ENCODE measurements at regions of chr17 and their contacts with region 1.

Region 1: GRCh38 chr17:37239690-37240334 is 136.0 kb upstream of the C17orf78 start:
- DNase-seq: peak; percentile 46
- H3K4me3 Mint-ChIP-seq: no peak overlapping the region
- H3K27ac Mint-ChIP-seq: no peak overlapping the region
- H3K4me1 Mint-ChIP-seq: peaks cover 10% of the 10 kb centered on the region
- H3K27me3 Mint-ChIP-seq: no peaks in the 10 kb centered on the region
- CTCF ChIP-seq: peak; percentile 55

Region 2: DNA sequence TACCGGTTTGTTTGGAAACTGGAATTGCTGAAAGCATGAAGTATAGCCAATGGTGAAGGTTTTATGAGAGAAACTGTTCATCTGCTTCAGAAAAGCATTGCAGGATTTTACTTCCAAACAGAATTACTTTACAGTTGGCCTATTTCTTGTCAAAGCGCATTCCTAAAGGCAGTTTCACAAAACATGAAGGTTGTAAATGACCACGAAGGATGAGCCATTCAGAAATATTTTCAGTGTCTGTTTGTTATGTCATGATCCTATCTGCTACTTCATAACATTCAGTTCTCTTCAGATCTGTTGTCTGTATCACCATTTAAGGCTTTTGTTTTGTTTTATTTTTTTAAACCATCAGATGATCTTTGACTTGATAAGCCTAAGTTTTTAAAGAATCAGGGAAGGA is 245.4 kb before region 1 on chr17:
- CTCF ChIA-PET with region 1: no interaction called
- POLR2A ChIA-PET with region 1: no interaction called
- intact Hi-C with region 1: no loop called
- DNase-seq: no peak
- H3K4me3 Mint-ChIP-seq: no peak overlapping the region
- H3K27ac Mint-ChIP-seq: peak overlapping the region; percentile 5
- H3K4me1 Mint-ChIP-seq: no peaks in the 10 kb centered on the region
- H3K27me3 Mint-ChIP-seq: no peaks in the 10 kb centered on the region
- CTCF ChIP-seq: no peak

Region 3: GRCh38 chr17:37220607-37220953 is 19.2 kb before region 1 on chr17:
- CTCF ChIA-PET with region 1: interaction called, 23 read pairs
- POLR2A ChIA-PET with region 1: interaction called, 3 read pairs
- intact Hi-C with region 1: no loop called
- DNase-seq: peak; percentile 8
- H3K4me3 Mint-ChIP-seq: no peak overlapping the region
- H3K27ac Mint-ChIP-seq: peak overlapping the region; percentile 83
- H3K4me1 Mint-ChIP-seq: peaks cover 11% of the 10 kb centered on the region
- H3K27me3 Mint-ChIP-seq: no peaks in the 10 kb centered on the region
- CTCF ChIP-seq: peak; percentile 47

Region 4: GRCh38 chr17:37255432-37255831 is 15.6 kb after region 1 on chr17:
- CTCF ChIA-PET with region 1: interaction called, 19 read pairs
- POLR2A ChIA-PET with region 1: interaction called, 7 read pairs
- intact Hi-C with region 1: no loop called
- DNase-seq: no peak
- H3K4me3 Mint-ChIP-seq: no peak overlapping the region
- H3K27ac Mint-ChIP-seq: no peak overlapping the region
- H3K4me1 Mint-ChIP-seq: no peaks in the 10 kb centered on the region
- H3K27me3 Mint-ChIP-seq: no peaks in the 10 kb centered on the region
- CTCF ChIP-seq: no peak

Region 5: GRCh38 chr17:37392024-37392590 is 152.3 kb after region 1 on chr17:
- CTCF ChIA-PET with region 1: interaction called, 4 read pairs
- POLR2A ChIA-PET with region 1: no interaction called
- intact Hi-C with region 1: loop called (anchors 1 kb)
- DNase-seq: peak; percentile 54
- H3K4me3 Mint-ChIP-seq: peak overlapping the region; percentile 35
- H3K27ac Mint-ChIP-seq: peak overlapping the region; percentile 68
- H3K4me1 Mint-ChIP-seq: peaks cover 14% of the 10 kb centered on the region
- H3K27me3 Mint-ChIP-seq: no peaks in the 10 kb centered on the region
- CTCF ChIP-seq: no peak

Region 6: GRCh38 chr17:37430051-37430627 is 190.3 kb after region 1 on chr17:
- CTCF ChIA-PET with region 1: no interaction called
- POLR2A ChIA-PET with region 1: no interaction called
- intact Hi-C with region 1: no loop called
- DNase-seq: peak; percentile 59
- H3K4me3 Mint-ChIP-seq: peak overlapping the region; percentile 17
- H3K27ac Mint-ChIP-seq: peak overlapping the region; percentile 88
- H3K4me1 Mint-ChIP-seq: peaks cover 10% of the 10 kb centered on the region
- H3K27me3 Mint-ChIP-seq: no peaks in the 10 kb centered on the region
- CTCF ChIP-seq: no peak

Measured in MCF 10A (cell line).